ENCODE measurements at regions of chr13 and their contacts with region 1.

Region 1: DNA sequence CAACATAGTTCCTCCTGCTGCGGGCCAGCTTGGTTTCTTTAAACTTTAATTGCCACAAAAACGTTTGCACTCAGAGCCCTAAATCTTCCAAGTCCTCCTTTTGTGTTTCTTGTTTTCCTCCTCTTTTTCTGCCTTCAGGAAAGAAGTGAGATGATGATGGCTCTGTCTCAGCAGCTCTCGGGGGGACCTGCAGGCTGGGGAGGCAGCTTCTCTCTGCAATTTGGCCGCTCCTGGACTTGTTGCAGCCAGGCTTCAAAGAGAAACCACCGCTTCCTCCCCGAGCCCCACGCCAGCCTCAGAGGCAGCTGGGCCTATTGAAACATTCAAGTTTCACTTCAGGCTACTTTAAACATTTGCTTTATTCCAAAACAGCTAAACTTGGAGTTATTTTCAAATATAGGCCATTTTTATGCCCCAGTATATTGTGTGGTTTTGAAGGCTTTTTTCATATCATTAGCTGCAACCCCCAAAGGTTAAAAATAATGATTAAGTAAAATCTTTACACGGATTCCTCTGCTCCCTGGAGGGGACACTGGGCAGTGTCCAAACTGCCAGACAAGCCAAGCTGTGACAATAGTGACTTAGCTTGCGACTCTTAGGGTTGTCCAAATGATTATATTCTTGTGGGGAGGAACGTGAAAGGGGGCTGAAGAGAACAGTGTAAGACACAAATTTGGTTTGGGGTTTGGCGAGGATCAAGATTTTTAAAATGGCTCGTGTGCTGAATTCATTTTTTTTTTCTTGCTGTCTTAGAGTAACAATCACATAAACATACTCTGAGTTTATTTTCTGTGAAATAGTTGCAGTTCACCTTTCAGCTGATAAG is 330.8 kb downstream of the DLEU7 start:
- DNase-seq: no peak
- ATAC-seq: peak; percentile 90
- H3K4me3 ChIP-seq: peak overlapping the region; percentile 25 to 49
- H3K27ac ChIP-seq: peak overlapping the region; percentile 89
- H3K4me1 ChIP-seq: peaks cover 21% of the 10 kb centered on the region
- H3K27me3 ChIP-seq: no peaks in the 10 kb centered on the region
- CTCF ChIP-seq: peak; percentile 20; the same call in 1 of the 2 replicates

Region 2: DNA sequence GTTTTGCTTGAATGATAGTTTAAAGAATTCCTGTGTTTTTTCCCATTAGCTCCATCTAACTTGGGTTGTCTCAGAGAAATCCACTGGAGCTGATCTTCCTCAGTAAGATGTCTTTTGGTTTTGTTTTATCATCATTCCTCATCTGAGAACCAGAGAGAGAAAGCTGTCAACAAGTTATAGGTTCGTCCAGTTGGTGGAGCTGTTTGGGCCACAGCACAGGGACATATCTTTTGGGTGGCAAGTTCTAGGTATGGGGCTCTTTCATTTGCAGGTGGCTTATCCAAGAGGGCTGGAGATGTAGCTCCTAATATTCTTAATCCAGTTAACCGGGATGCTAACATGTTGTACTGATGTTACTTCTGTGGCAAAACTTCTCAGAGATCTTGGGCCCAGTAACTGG is 323.2 kb before region 1 on chr13:
- CTCF ChIA-PET with region 1: no interaction called
- POLR2A ChIA-PET with region 1: no interaction called
- in situ Hi-C with region 1: no loop called
- intact Hi-C with region 1: no loop called
- DNase-seq: no peak
- ATAC-seq: no peak
- H3K4me3 ChIP-seq: no peak overlapping the region
- H3K27ac ChIP-seq: peak overlapping the region; percentile 39; the same call in 1 of the 2 replicates
- H3K4me1 ChIP-seq: peaks cover 15% of the 10 kb centered on the region; the same call in 1 of the 2 replicates
- H3K27me3 ChIP-seq: no peaks in the 10 kb centered on the region
- CTCF ChIP-seq: peak; percentile 25; the same call in 1 of the 2 replicates

Region 3: DNA sequence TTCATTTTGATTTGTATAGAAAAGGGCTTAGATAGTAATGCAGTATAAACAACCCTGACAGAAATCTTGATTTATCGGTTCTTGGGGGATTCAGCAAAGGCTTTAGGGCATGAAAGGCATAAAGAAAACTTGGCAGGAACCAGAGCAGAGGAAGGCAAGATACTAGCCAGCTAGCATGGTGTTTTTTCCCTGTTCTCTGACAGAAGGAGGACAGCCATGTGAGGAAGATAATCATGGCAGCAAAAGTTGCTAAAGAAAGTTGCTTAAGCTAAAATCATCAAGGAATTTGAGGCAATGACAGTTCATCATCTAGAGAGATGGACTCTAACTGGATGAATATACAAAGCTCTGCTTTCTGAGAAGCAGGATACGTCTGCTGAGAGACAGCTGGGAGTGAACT is 203.4 kb before region 1 on chr13:
- CTCF ChIA-PET with region 1: no interaction called
- POLR2A ChIA-PET with region 1: no interaction called
- in situ Hi-C with region 1: no loop called
- intact Hi-C with region 1: no loop called
- DNase-seq: no peak
- ATAC-seq: no peak
- H3K4me3 ChIP-seq: no peak overlapping the region
- H3K27ac ChIP-seq: peak overlapping the region; percentile 69
- H3K4me1 ChIP-seq: peaks cover 5% of the 10 kb centered on the region; the same call in 1 of the 2 replicates
- H3K27me3 ChIP-seq: no peaks in the 10 kb centered on the region
- CTCF ChIP-seq: no peak

Region 4: GRCh38 chr13:50319635-50320255 is 192.9 kb before region 1 on chr13:
- CTCF ChIA-PET with region 1: no interaction called
- POLR2A ChIA-PET with region 1: no interaction called
- in situ Hi-C with region 1: no loop called
- intact Hi-C with region 1: loop called (anchors 5 kb)
- DNase-seq: no peak
- ATAC-seq: peak; percentile 90
- H3K4me3 ChIP-seq: no peak overlapping the region
- H3K27ac ChIP-seq: peak overlapping the region; percentile 97
- H3K4me1 ChIP-seq: peaks cover 29% of the 10 kb centered on the region
- H3K27me3 ChIP-seq: no peaks in the 10 kb centered on the region
- CTCF ChIP-seq: no peak

Region 5: GRCh38 chr13:50401049-50401505 is 111.6 kb before region 1 on chr13:
- CTCF ChIA-PET with region 1: no interaction called
- POLR2A ChIA-PET with region 1: interaction called, 10 read pairs
- in situ Hi-C with region 1: no loop called
- intact Hi-C with region 1: no loop called
- DNase-seq: no peak
- ATAC-seq: no peak
- H3K4me3 ChIP-seq: no peak overlapping the region
- H3K27ac ChIP-seq: peak overlapping the region; percentile 51; the same call in 1 of the 2 replicates
- H3K4me1 ChIP-seq: no peaks in the 10 kb centered on the region
- H3K27me3 ChIP-seq: no peaks in the 10 kb centered on the region
- CTCF ChIP-seq: no peak

Region 6: DNA sequence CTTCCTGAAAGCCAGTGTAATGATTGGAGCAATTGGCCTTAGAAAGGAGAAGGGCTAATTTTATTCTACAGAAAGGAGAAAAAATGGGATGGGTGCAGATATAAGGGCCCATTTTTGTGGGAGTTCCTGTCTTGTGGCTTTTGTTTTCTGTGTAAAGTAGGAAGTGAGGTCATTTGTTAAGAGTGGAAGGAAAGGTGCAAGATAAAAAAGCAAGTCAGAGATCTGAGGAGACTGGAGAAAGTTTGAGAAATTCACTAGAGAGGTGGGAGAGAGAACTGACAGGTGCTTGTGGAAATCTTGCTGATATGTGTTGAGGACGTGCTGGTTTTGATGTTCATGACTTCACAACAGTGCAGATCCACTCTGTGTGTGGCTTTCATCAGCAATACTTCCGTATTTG is 18.5 kb before region 1 on chr13:
- CTCF ChIA-PET with region 1: no interaction called
- POLR2A ChIA-PET with region 1: no interaction called
- in situ Hi-C with region 1: no loop called
- intact Hi-C with region 1: no loop called
- DNase-seq: no peak
- ATAC-seq: no peak
- H3K4me3 ChIP-seq: no peak overlapping the region
- H3K27ac ChIP-seq: peak overlapping the region; percentile 17; the same call in 1 of the 2 replicates
- H3K4me1 ChIP-seq: no peaks in the 10 kb centered on the region
- H3K27me3 ChIP-seq: no peaks in the 10 kb centered on the region
- CTCF ChIP-seq: no peak

Measured in Panc1 (cell line).